CD8-positive, alpha-beta T cell (primary cell): ENCODE measurements at regions of chr10 and their contacts with region 1.

Region 1: DNA sequence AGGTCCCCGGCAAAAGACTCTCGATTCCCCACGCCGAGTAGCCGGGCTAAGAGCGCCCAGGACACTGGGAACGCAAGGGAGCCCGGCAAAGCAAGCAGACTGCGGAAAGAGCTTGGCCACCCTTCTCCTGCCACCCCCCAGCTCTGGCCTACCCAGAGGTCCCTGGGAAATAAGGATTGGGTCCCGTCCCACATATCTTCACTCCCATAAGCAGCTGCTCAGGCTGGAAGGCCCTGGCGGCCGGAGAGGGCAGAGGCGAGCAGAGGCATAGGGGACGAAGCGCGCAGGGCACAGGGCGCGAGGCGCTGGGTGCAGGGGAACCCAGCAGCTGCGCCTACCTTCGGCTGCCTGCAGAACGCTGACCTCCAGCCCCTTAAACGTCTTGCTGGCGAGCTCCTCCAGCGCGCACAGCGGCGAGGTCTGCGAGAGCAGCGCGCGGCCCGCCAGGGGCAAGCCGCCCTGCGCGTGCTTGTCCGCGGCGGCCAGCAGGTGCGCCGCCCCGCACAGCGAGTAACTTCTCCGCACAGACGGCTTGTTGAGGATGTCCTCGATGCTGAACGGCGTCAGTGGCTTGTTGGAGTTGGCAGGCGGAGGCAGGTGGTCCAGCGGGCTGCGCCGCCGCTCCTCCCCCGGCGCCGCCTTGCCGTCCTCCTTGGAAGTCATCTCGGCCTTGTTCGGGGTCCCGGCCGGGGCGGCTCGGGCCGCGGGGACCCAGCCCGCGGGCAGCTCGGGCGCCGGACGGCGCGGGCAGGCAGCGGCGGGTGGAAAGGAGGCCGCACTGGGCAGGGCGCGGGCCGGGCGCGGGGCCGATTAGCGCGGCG is 900 bp downstream of the LBX1 start:
- DNase-seq: peak in 2 of 9 experiments; percentile 16 to 20
- ATAC-seq: no peak
- H3K4me3 ChIP-seq: no peak overlapping the region
- H3K4me3 Mint-ChIP-seq: peak overlapping the region; percentile 72
- H3K27ac ChIP-seq: no peak overlapping the region
- H3K27ac Mint-ChIP-seq: no peak overlapping the region
- H3K4me1 ChIP-seq: peaks cover 55% of the 10 kb centered on the region
- H3K4me1 Mint-ChIP-seq: peaks cover 38% of the 10 kb centered on the region
- H3K27me3 ChIP-seq: peaks cover 60 to 70% of the 10 kb centered on the region in 2 experiments
- H3K27me3 Mint-ChIP-seq: peaks cover 71% of the 10 kb centered on the region
- CTCF ChIP-seq: no peak

Region 2: GRCh38 chr10:101238732-101239105 is 10.4 kb after region 1 on chr10:
- CTCF ChIA-PET with region 1: interaction called, 15 read pairs
- POLR2A ChIA-PET with region 1: no interaction called
- intact Hi-C with region 1: no loop called
- DNase-seq: peak in 2 of 9 experiments; percentile 42 to 51
- ATAC-seq: peak; percentile 58
- H3K4me3 ChIP-seq: no peak overlapping the region
- H3K4me3 Mint-ChIP-seq: no peak overlapping the region
- H3K27ac ChIP-seq: no peak overlapping the region
- H3K27ac Mint-ChIP-seq: no peak overlapping the region
- H3K4me1 ChIP-seq: peaks cover 24% of the 10 kb centered on the region
- H3K4me1 Mint-ChIP-seq: peaks cover 18% of the 10 kb centered on the region
- H3K27me3 ChIP-seq: peaks cover 33 to 51% of the 10 kb centered on the region in 2 experiments
- H3K27me3 Mint-ChIP-seq: peaks cover 74% of the 10 kb centered on the region
- CTCF ChIP-seq: peak; percentile 64